ENCODE measurements at regions of chr9 and their contacts with region 1.

Region 1: DNA sequence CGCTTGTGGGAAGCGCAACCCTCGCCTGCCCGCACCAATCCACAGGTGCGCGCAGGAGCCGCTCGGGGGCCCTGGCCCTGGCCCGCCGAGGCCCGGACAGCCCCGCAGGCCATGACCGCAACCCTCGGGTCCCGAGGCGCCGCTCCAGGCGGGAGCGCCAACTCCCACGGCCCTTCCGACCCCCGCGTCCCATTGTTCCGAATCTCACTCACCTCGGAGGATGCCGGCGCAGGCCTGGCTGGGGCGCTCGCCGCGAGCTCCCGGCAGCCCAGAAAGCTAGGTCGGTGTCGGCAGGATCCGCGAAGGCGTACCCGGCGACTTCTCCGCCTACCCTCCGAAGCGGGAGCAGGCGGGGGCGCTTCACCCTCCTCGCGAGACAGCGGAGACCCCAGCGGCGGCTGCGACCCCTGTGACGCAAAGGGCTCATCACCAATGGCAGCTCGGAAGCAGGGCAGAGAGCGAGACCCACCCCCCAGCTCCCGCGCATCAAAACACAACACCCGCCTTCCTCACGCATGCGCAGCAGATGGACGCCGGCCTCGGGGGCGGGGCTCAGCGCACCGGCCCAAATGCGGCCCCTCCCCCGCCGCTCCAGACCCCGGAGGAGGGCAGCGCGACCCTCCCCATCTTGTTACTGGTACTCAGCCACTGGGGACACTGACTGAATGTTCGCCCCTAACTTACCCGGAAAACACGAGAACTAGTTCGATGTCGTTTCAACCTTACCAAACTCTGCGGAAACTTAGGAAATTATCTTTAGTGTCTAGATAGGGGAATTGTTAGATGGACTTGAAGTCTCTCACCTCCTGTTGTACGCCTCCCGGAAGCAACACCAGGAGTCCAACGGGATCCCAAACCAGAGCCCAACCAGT is 1.3 kb upstream of the SMIM27 start:
- DNase-seq: peak; percentile 30
- H3K4me3 ChIP-seq: peak overlapping the region; percentile 64 to 97 (median 77)
- H3K27ac ChIP-seq: peak overlapping the region; percentile 91
- H3K4me1 ChIP-seq: peaks cover 12% of the 10 kb centered on the region
- H3K27me3 ChIP-seq: no peaks in the 10 kb centered on the region
- CTCF ChIP-seq: peak in 1 of 3 experiments; percentile 8

Region 2: DNA sequence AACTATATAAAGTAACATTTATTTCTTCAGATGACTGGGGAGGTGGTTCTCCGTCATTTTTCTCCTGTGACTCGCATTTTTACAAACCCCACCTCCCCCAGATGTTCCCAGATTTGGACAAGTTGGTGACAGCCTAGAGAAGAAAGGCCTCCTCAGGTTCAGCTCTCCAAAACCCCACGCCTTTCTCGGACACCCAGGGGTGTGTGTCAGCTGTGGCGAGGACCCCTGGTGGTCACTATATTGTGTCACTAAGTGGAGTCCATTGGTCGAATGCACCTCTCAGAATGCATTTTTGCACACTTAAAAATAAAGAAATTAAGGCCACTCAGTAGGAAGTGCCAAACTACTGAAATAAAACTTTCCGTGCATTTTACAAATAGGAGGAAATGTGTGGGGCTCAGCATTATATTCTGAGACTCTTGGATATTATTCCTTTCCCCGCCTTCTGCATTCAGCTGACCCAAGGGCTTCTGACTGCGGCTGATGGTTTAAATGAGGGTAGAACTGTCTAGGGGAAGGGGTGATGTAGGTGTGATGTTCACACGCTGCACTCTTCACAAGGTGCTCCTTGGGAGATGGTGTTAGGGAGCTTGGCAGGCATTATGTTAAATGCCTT is 118.8 kb before region 1 on chr9:
- dilution Hi-C with region 1: loop called (anchors 25 kb)
- DNase-seq: no peak
- H3K4me3 ChIP-seq: no peak overlapping the region
- H3K27ac ChIP-seq: no peak overlapping the region
- H3K4me1 ChIP-seq: no peaks in the 10 kb centered on the region
- H3K27me3 ChIP-seq: no peaks in the 10 kb centered on the region
- CTCF ChIP-seq: peak; percentile 30 to 61 (median 44)

Region 3: GRCh38 chr9:32839013-32839885 is 288.5 kb after region 1 on chr9:
- dilution Hi-C with region 1: no loop called
- DNase-seq: no peak
- H3K4me3 ChIP-seq: no peak overlapping the region
- H3K27ac ChIP-seq: no peak overlapping the region
- H3K4me1 ChIP-seq: no peaks in the 10 kb centered on the region
- H3K27me3 ChIP-seq: no peaks in the 10 kb centered on the region
- CTCF ChIP-seq: no peak

Measured in keratinocyte (primary cell).